ENCODE measurements at regions of chr4 and their contacts with region 1.

Region 1: GRCh38 chr4:44927399-44928380 is 201.3 kb upstream of the GNPDA2 start:
- DNase-seq: peak; percentile 4
- CTCF ChIP-seq: peak; percentile 27

Region 2: DNA sequence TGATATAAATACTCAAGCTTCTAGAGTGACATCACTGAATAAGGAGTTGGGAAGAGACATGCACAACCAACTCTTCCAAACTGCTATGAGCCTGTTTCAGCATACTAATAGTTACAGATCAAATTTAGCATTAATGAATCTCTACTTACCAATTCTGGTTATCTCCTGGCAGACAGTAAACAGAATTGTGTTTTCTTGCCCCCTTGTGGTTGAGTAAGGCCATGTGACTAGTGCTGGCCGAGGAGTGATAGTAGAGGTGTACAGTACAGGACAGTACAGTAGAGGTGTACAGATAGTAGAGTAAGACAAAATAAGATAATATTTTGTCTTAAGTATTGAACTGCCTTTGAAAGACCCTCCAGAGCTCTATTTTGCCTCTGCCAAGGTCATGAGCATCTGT is 514.8 kb after region 1 on chr4:
- CTCF ChIA-PET with region 1: interaction called, 15 read pairs
- POLR2A ChIA-PET with region 1: no interaction called
- DNase-seq: no peak
- CTCF ChIP-seq: no peak